Activated CD4-positive, alpha-beta T cell treated with anti-CD3 and anti-CD28 coated beads, Interleukin-2, amount 10 ng/mL, durations not matched to agents 7 days and 5 days (primary cell): ENCODE measurements at regions of chr16 and their contacts with region 1.

Region 1: GRCh38 chr16:28277537-28278388 is 14.6 kb upstream of the SBK1 start:
- DNase-seq: peak; percentile 83
- H3K4me3 Mint-ChIP-seq: peak overlapping the region; percentile 61
- H3K27ac Mint-ChIP-seq: peak overlapping the region; percentile 92
- H3K4me1 Mint-ChIP-seq: peaks cover 46% of the 10 kb centered on the region
- H3K27me3 Mint-ChIP-seq: peaks cover 22% of the 10 kb centered on the region

Region 2: DNA sequence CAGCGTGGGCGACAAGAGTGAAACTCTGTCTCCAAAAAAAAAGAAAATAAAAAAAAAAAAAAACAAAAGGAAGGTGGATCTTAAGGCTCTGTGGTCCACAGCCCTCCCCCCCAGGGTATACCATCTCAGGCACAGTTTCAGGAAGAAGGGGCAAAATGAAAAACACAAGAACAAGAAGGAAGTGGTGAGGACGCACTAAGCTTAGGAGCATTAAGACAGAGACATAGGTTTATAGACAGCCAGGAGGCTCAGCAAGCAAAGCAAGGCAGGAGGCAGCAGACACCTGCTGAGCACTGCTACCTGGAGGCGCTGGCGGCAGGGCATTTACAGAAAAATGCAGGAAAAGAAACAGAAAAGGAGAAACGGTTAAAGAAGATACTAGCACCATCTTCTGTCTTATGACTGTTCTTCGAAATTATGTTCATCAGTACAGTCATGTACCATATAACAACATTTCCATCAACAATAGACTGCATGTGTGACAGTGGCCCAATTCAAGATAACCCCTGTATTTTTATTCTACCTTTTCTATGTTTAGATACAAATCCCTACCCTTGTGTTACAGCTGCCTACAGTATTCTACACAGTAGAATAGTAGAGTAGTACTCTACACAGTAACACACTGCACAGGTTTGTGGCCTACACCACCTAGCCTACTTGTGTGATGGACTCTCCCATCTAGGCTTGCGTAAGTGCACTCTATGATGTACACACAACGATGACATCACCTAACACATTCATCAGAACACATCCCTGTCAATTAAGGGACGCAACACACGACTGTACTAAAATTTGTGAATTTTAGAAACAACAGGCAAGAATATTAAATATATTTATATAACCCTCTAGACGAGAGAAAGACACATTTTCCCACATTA is 128.5 kb before region 1 on chr16:
- CTCF ChIA-PET with region 1: no interaction called
- POLR2A ChIA-PET with region 1: no interaction called
- DNase-seq: peak; percentile 48
- H3K4me3 Mint-ChIP-seq: peak overlapping the region; percentile 0
- H3K27ac Mint-ChIP-seq: peak overlapping the region; percentile 88
- H3K4me1 Mint-ChIP-seq: peaks cover 74% of the 10 kb centered on the region
- H3K27me3 Mint-ChIP-seq: no peaks in the 10 kb centered on the region

Region 3: GRCh38 chr16:28261942-28262341 is 15.8 kb before region 1 on chr16:
- CTCF ChIA-PET with region 1: no interaction called
- POLR2A ChIA-PET with region 1: no interaction called
- DNase-seq: no peak
- H3K4me3 Mint-ChIP-seq: no peak overlapping the region
- H3K27ac Mint-ChIP-seq: no peak overlapping the region
- H3K4me1 Mint-ChIP-seq: peaks cover 21% of the 10 kb centered on the region
- H3K27me3 Mint-ChIP-seq: peaks cover 21% of the 10 kb centered on the region

Region 4: DNA sequence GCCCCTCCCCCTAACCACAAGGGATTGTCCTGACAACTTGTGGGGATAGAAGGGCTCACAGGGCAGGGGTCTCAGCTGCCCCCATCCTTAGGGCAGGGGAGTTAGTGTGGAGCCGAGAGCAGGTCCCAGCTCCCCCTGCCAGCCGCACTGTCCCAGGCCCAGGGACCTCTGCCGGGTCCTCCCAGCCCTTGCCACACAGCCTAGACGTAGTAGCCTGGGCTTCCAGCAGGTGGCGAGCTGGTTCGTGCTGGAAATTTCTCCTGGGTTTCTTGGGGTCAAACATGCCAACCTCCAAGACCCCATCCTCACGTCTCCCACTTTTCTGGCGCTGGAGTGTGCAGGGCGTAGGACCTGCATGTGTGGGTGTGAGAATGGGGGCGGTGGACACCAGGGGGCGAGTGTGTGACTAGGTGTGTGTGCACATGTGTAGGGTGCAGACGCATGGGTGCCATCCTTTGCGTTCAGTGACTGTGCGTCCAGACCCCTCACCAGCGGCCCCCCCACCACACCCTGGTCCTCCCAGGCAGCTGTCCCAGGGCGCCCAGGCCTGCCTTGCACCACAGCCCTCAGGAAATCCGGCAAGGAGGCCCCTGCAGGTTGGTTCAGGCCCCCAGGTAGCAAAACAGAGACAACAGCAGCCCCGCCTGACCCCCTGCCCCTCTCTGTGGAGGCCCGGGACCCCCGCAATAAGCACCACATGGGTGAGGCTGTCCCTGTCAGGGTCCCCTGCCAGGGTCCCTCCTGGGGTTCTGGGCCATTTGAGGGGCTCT is 44.1 kb after region 1 on chr16:
- CTCF ChIA-PET with region 1: interaction called, 15 read pairs
- POLR2A ChIA-PET with region 1: no interaction called
- DNase-seq: peak; percentile 46
- H3K4me3 Mint-ChIP-seq: no peak overlapping the region
- H3K27ac Mint-ChIP-seq: no peak overlapping the region
- H3K4me1 Mint-ChIP-seq: peaks cover 11% of the 10 kb centered on the region
- H3K27me3 Mint-ChIP-seq: no peaks in the 10 kb centered on the region